ENCODE measurements at regions of chr5 and their contacts with region 1.

Region 1: GRCh38 chr5:171907725-171908343 is 98.6 kb downstream of the FBXW11 start:
- DNase-seq: peak; percentile 78
- H3K4me3 Mint-ChIP-seq: no peak overlapping the region
- H3K27ac Mint-ChIP-seq: peak overlapping the region; percentile 78
- H3K4me1 Mint-ChIP-seq: peaks cover 63% of the 10 kb centered on the region
- H3K27me3 Mint-ChIP-seq: no peaks in the 10 kb centered on the region

Region 2: GRCh38 chr5:170745481-170746071 is 1162.3 kb before region 1 on chr5:
- CTCF ChIA-PET with region 1: no interaction called
- intact Hi-C with region 1: loop called (anchors 5 kb)
- DNase-seq: no peak
- H3K4me3 Mint-ChIP-seq: no peak overlapping the region
- H3K27ac Mint-ChIP-seq: no peak overlapping the region
- H3K4me1 Mint-ChIP-seq: peaks cover 7% of the 10 kb centered on the region
- H3K27me3 Mint-ChIP-seq: peaks cover 33% of the 10 kb centered on the region

Region 3: GRCh38 chr5:171418316-171418981 is 489.4 kb before region 1 on chr5:
- CTCF ChIA-PET with region 1: interaction called, 10 read pairs
- intact Hi-C with region 1: loop called (anchors 1 kb)
- DNase-seq: peak; percentile 71
- H3K4me3 Mint-ChIP-seq: peak overlapping the region; percentile 53
- H3K27ac Mint-ChIP-seq: no peak overlapping the region
- H3K4me1 Mint-ChIP-seq: peaks cover 13% of the 10 kb centered on the region
- H3K27me3 Mint-ChIP-seq: peaks cover 25% of the 10 kb centered on the region

Region 4: GRCh38 chr5:171676286-171676944 is 231.4 kb before region 1 on chr5:
- CTCF ChIA-PET with region 1: no interaction called
- intact Hi-C with region 1: loop called (anchors 5 kb)
- DNase-seq: no peak
- H3K4me3 Mint-ChIP-seq: no peak overlapping the region
- H3K27ac Mint-ChIP-seq: no peak overlapping the region
- H3K4me1 Mint-ChIP-seq: peaks cover 15% of the 10 kb centered on the region
- H3K27me3 Mint-ChIP-seq: peaks cover 22% of the 10 kb centered on the region

Region 5: DNA sequence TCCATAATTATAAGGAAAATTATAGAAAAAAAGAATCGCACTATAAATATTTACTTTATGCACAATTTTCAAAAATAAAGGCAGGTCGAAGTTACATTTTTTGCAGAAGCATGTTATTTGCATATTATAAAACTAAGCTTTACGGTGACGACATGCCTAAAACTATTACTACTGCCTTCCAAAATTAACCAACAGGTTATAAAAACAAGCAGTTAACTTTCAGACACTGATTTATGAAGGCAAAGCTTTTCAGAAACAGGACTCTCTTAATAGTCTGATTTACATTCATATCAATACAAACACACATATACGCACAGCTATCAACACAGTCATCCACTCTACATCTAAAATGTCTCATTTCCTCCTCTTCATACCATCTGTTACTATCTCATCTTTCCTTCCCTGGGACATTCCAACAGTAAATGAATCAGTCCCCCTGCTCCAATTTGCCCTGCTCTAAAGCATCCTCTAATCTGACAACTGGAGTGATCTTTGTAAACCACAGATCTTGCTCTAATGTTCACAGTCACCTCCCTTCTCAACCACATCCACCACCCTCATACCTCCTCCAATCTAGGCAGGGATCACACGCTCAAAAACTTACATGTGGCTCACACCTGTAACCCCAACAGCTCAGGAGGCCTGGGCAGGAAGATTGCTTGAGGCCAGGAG is 77.0 kb after region 1 on chr5:
- CTCF ChIA-PET with region 1: interaction called, 13 read pairs
- intact Hi-C with region 1: loop called (anchors 1 kb)
- DNase-seq: peak; percentile 63
- H3K4me3 Mint-ChIP-seq: no peak overlapping the region
- H3K27ac Mint-ChIP-seq: peak overlapping the region; percentile 50
- H3K4me1 Mint-ChIP-seq: peaks cover 55% of the 10 kb centered on the region
- H3K27me3 Mint-ChIP-seq: no peaks in the 10 kb centered on the region

Region 6: GRCh38 chr5:172106511-172107356 is 198.9 kb after region 1 on chr5:
- CTCF ChIA-PET with region 1: no interaction called
- intact Hi-C with region 1: loop called (anchors 1 kb)
- DNase-seq: peak; percentile 71
- H3K4me3 Mint-ChIP-seq: no peak overlapping the region
- H3K27ac Mint-ChIP-seq: peak overlapping the region; percentile 50
- H3K4me1 Mint-ChIP-seq: peaks cover 40% of the 10 kb centered on the region
- H3K27me3 Mint-ChIP-seq: no peaks in the 10 kb centered on the region

Region 7: DNA sequence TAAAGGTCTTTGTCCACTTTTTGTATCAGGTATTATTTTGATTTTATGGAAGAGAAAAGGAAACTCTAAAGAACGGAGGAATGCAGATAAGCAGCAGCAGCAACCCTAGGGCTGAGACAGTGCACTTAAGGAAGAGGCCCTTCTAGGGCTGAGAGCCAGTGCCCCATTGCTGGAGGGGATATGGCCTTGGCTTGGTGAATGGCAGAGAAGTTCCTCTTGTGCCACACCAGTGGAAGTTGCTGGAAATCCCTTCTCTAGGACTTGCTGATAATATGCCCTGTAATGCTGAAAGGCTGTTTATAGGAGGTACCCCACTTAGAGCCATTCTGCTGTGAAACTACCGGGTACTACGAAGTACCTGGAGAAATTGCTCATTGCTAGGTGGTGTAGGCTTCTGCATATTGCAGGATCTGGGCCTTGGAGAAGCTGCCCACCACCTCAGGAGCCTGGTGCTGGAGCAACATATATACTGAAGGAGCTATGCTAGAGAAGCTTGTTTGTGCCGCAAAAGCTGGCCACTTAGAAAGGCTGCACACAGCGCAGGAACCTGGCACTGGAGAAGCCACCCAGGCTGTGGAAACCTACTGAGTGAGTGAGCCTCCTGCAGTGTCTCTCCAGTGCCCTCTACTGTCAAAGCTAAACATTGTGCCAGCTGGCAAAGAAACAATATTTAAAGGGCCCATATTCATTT is 385.4 kb after region 1 on chr5:
- CTCF ChIA-PET with region 1: interaction called, 9 read pairs
- intact Hi-C with region 1: loop called (anchors 1 kb)
- DNase-seq: peak; percentile 76
- H3K4me3 Mint-ChIP-seq: no peak overlapping the region
- H3K27ac Mint-ChIP-seq: no peak overlapping the region
- H3K4me1 Mint-ChIP-seq: no peaks in the 10 kb centered on the region
- H3K27me3 Mint-ChIP-seq: peaks cover 3% of the 10 kb centered on the region